HCT116 (cell line): ENCODE measurements at regions of chr10 and their contacts with region 1.

Region 1: DNA sequence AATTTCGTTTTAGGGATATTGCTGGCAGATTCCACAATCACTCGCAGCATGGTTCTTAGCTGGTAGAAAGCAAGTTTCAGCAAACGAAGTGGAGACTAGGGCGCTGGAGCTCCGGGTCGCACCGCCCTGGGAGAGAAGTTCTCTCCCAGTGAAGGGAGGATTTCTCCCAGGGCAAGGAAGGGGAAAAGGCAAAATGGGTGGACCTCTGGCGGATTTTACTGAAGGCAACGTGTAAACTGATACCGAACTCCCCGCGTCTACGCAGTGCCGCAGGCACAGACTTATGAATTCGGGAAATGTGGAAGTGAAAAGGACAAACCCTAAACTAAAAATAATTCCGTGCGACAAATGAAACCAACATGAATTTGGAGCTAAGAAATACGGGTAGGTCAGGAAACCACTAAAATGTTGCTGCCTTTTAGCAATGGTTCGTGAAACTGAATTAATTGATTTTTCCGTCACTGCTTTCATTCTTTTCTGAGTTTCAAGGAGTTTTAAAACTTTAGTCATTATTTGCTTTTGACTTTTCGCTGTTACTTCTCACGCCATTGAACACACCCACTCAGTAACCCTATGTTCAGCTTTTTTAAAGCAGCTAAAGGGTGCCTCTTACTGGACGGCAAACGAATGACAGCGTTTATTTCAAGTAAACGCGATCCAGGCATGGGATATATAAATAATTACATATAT is at the start of gene MYOF:
- DNase-seq: peak; percentile 78
- ATAC-seq: peak; percentile 68
- H3K4me3 ChIP-seq: peak within 1 kb of the TSS; percentile 57 to 83
- H3K27ac ChIP-seq: peak within 1 kb of the TSS; percentile 98
- H3K4me1 ChIP-seq: peaks cover 41 to 58% of the 10 kb centered on the region in 2 experiments
- H3K27me3 ChIP-seq: no peaks in the 10 kb centered on the region
- CTCF ChIP-seq: peak; percentile 48 to 63 (median 51); a peak in 5 of 6 replicates
- POLR2A ChIP-seq: peak; percentile 18
- RAD21 ChIP-seq: peak; percentile 84
- total RNA-seq, gene MYOF: 250 TPM

Region 2: GRCh38 chr10:93352638-93353383 is 129.5 kb before region 1 on chr10:
- CTCF ChIA-PET with region 1: interaction called, 13 read pairs
- POLR2A ChIA-PET with region 1: interaction called, 3 read pairs
- RAD21 ChIA-PET with region 1: interaction called in 1 of 2 experiments, 3 read pairs
- intact Hi-C with region 1: no loop called
- DNase-seq: no peak
- ATAC-seq: peak; percentile 62
- H3K4me3 ChIP-seq: no peak overlapping the region
- H3K27ac ChIP-seq: no peak overlapping the region; the same call in 1 of the 2 replicates
- H3K4me1 ChIP-seq: no peaks in the 10 kb centered on the region
- H3K27me3 ChIP-seq: no peaks in the 10 kb centered on the region
- CTCF ChIP-seq: peak; percentile 44 to 84 (median 46); a peak in 5 of 6 replicates
- POLR2A ChIP-seq: no peak
- RAD21 ChIP-seq: peak; percentile 56

Region 3: DNA sequence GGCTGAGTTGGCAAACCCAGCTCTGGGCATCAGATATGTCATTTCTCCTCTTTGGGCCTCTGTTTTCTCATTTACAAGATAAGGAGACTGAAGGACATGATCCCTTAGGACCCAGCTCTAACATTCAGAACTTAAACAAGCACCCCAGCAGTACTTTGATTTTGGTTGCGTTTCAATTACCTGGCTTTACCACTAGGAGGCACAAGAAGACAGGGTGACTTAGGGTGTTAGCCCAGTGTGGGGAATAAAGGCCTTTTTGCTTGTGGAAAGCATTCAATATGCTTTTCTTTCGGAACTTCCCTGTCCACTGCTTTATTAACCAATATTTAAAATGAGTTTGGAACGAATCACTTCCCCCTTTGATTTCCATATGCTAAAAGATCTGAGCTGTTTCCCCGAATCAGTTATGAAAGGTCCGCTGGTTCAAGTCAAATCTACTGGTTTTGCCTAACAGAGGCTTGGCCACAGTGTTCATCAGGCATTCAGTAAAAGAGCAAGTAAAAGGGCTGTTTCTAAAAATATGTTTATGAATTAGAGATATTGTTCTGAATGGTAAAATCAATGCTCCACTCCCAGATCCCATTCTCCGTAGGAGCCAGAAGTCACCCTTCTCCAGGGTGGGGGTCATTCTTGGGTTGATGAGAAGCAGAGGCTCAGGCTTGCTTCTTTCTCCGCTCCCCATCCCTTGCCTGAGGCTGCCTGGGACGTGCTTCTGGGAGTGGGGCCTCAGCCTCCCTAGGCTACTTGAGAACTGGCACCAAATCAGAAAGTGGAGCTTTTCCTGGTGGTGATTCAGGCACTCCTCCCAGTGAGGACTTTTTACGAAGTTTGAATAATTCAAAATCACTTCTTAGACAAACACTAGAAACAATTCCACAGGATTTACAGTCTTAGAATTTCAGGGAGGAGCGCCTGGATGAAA is 105.7 kb before region 1 on chr10:
- CTCF ChIA-PET with region 1: interaction called, 196 read pairs
- POLR2A ChIA-PET with region 1: interaction called, 36 read pairs
- RAD21 ChIA-PET with region 1: interaction called, 37 to 40 read pairs
- intact Hi-C with region 1: loop called (anchors 1 kb)
- DNase-seq: peak; percentile 80
- ATAC-seq: peak; percentile 83
- H3K4me3 ChIP-seq: no peak overlapping the region
- H3K27ac ChIP-seq: peak overlapping the region; percentile 80
- H3K4me1 ChIP-seq: peaks cover 29 to 49% of the 10 kb centered on the region in 2 experiments
- H3K27me3 ChIP-seq: no peaks in the 10 kb centered on the region
- CTCF ChIP-seq: peak; percentile 84 to 91 (median 90); a peak in 5 of 6 replicates
- POLR2A ChIP-seq: no peak
- RAD21 ChIP-seq: peak; percentile 98

Region 4: GRCh38 chr10:93437088-93437945 is 45.0 kb before region 1 on chr10:
- CTCF ChIA-PET with region 1: interaction called, 14 read pairs
- POLR2A ChIA-PET with region 1: interaction called, 10 read pairs
- RAD21 ChIA-PET with region 1: interaction called in 1 of 2 experiments, 7 read pairs
- intact Hi-C with region 1: loop called (anchors 1 kb)
- DNase-seq: peak; percentile 86
- ATAC-seq: peak; percentile 79
- H3K4me3 ChIP-seq: peak overlapping the region; percentile 12 to 35
- H3K27ac ChIP-seq: peak overlapping the region; percentile 100
- H3K4me1 ChIP-seq: peaks cover 88 to 96% of the 10 kb centered on the region in 2 experiments
- H3K27me3 ChIP-seq: no peaks in the 10 kb centered on the region
- CTCF ChIP-seq: no peak
- POLR2A ChIP-seq: no peak
- RAD21 ChIP-seq: peak; percentile 22; the same call in 1 of the 2 replicates

Region 5: GRCh38 chr10:93471110-93471651 is 11.1 kb before region 1 on chr10:
- CTCF ChIA-PET with region 1: interaction called, 12 read pairs
- POLR2A ChIA-PET with region 1: interaction called, 21 read pairs
- RAD21 ChIA-PET with region 1: interaction called, 7 to 8 read pairs
- intact Hi-C with region 1: no loop called
- DNase-seq: peak; percentile 95
- ATAC-seq: peak; percentile 37
- H3K4me3 ChIP-seq: peak overlapping the region in 1 of 2 experiments; percentile 36; a peak in 1 of 4 replicates
- H3K27ac ChIP-seq: peak overlapping the region; percentile 98
- H3K4me1 ChIP-seq: peaks cover 83 to 96% of the 10 kb centered on the region in 2 experiments
- H3K27me3 ChIP-seq: no peaks in the 10 kb centered on the region
- CTCF ChIP-seq: no peak
- POLR2A ChIP-seq: no peak
- RAD21 ChIP-seq: no peak

Region 6: GRCh38 chr10:93680412-93681047 is 198.2 kb after region 1 on chr10:
- CTCF ChIA-PET with region 1: interaction called, 19 read pairs
- POLR2A ChIA-PET with region 1: no interaction called
- RAD21 ChIA-PET with region 1: interaction called, 3 to 4 read pairs
- intact Hi-C with region 1: loop called (anchors 1 kb)
- DNase-seq: peak; percentile 34
- ATAC-seq: peak; percentile 74
- H3K4me3 ChIP-seq: no peak overlapping the region
- H3K27ac ChIP-seq: no peak overlapping the region
- H3K4me1 ChIP-seq: no peaks in the 10 kb centered on the region
- H3K27me3 ChIP-seq: no peaks in the 10 kb centered on the region
- CTCF ChIP-seq: peak; percentile 32 to 65 (median 60); a peak in 5 of 6 replicates
- POLR2A ChIP-seq: no peak
- RAD21 ChIP-seq: peak; percentile 76

Region 7: DNA sequence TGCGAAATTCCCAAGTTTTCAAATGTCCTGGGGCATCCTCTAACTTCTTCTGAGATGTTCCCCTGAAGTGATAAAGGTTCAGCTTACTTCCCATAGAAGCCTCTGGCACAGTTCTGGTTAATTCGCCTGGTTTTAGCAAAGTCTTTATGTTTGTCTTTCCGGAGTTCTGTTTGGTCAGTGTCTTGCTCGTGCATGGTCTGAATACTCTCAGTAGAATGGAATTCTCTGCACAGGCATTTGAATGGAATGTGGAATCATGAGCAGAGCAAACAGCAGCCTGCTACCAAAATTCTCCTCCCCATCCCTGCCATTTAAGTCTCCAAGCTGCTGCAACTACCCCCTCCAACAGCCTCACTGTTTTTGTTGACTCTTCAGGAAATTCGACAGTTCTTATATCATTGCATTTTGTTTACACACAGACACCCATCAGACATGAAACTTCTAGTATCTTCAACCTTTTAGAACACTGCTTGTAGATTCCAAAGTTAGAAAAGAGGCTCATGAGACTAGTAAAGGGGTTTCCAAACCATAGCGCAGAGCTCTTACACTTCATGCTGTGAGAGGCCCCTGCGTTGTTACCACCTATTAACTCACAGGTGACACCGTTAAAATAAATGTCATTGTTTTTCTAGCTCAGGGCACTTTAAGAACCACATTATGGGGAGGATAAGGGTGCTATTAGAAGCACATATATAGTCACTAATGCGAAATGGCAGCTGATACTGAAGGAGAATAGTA is 641.1 kb after region 1 on chr10:
- CTCF ChIA-PET with region 1: no interaction called
- POLR2A ChIA-PET with region 1: no interaction called
- RAD21 ChIA-PET with region 1: no interaction called
- intact Hi-C with region 1: no loop called
- DNase-seq: no peak
- ATAC-seq: no peak
- H3K4me3 ChIP-seq: no peak overlapping the region
- H3K27ac ChIP-seq: no peak overlapping the region
- H3K4me1 ChIP-seq: no peaks in the 10 kb centered on the region; a peak in 1 of 4 replicates
- H3K27me3 ChIP-seq: no peaks in the 10 kb centered on the region
- CTCF ChIP-seq: no peak
- POLR2A ChIP-seq: no peak
- RAD21 ChIP-seq: no peak